Pancreas (tissue), 10 donors: ENCODE measurements at regions of chr11 and their contacts with region 1.

Region 1: GRCh38 chr11:113730887-113731726 is 25.0 kb upstream of the TMPRSS5 start:
- DNase-seq: peak in 2 of 6 donors; percentile 12 to 25
- ATAC-seq: peak in 3 of 4 donors; percentile 66 to 85 (median 84)
- H3K4me3 ChIP-seq: no peak overlapping the region
- H3K27ac ChIP-seq: no peak overlapping the region
- H3K4me1 ChIP-seq: no peaks in the 10 kb centered on the region
- H3K27me3 ChIP-seq: no peaks in the 10 kb centered on the region
- CTCF ChIP-seq: peak in 2 of 4 donors; percentile 19 to 40

Region 2: GRCh38 chr11:113305440-113306336 is 425.4 kb before region 1 on chr11:
- intact Hi-C with region 1: loop called in 1 of 3 experiments (anchors 5 kb)
- DNase-seq: peak; percentile 56 to 90 (median 80)
- ATAC-seq: peak; percentile 92 to 100 (median 98)
- H3K4me3 ChIP-seq: no peak overlapping the region
- H3K27ac ChIP-seq: no peak overlapping the region
- H3K4me1 ChIP-seq: no peaks in the 10 kb centered on the region
- H3K27me3 ChIP-seq: no peaks in the 10 kb centered on the region
- CTCF ChIP-seq: peak; percentile 77 to 94 (median 87)

Region 3: DNA sequence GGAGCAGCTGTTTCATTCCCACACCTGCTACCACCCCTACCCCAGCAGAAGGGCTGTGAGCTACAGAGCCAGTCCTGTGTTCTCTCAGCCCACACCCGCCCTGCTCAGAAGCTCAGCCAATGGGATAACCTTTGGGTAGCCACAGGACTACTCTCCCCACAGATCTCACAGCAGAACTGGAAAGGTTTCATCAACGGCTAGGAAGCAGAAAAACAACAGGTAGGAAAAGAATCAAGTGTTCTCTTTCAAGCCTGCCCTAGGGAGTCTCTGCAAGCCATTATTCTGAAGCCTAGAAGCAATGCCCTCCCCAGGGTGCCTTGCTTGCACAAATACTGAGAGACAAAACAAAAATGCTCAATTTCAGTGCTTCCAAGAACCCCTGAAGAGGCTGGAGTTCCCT is 102.2 kb before region 1 on chr11:
- intact Hi-C with region 1: no loop called
- DNase-seq: peak in 5 of 6 donors; percentile 37 to 75 (median 61)
- ATAC-seq: peak; percentile 91 to 100 (median 99)
- H3K4me3 ChIP-seq: no peak overlapping the region
- H3K27ac ChIP-seq: peak overlapping the region in 2 of 4 donors; percentile 41 to 58
- H3K4me1 ChIP-seq: peaks cover 0 to 3% (median 0%) of the 10 kb centered on the region in 3 donors
- H3K27me3 ChIP-seq: no peaks in the 10 kb centered on the region
- CTCF ChIP-seq: no peak